ENCODE measurements at regions of chr17 and their contacts with region 1.

Region 1: DNA sequence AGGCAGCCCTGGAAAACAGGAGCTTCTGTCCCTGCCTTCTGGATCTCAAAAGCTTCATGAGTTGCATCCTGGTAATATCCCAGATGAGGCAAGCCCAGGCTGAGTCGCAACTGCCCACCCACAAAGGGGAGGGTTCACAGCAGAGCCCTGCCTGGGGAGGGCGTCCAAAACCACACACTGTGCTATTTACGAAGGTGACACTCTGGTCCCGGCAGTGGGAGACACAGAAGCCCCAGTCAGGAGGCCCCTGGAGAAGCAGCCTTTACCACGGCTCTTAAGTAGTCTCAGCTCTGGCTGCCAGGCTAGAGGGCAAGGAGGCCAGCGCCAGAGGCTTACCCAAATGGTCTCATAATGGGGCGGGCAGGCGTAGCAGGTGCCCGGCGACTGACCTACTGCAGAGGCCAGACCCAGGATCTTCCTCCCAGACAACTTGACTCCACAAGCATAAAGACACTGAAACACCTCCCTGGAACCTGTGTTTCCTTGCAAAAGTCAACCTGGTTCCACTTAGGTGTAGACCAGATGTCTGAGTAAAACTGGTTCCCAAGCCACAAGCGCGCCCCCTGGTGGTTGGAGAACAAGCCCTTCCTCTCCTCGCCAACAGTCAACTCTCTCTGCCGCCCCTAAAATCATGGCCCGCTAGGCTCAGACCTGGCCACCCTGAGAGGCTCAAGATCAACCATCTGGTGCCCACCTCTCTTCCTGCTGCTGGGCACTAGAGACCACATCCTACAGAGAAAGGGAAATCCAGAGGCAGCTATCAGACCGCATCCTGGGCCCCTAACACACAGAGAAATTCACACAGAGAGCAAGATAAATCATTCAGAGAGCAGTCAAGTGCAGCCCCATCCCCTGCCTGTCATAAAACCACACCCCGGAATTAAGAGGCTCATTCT is 5.2 kb downstream of the AXIN2 start:
- DNase-seq: peak; percentile 96
- H3K4me3 Mint-ChIP-seq: peak overlapping the region; percentile 20
- H3K27ac Mint-ChIP-seq: no peak overlapping the region
- H3K4me1 Mint-ChIP-seq: peaks cover 22% of the 10 kb centered on the region
- H3K27me3 Mint-ChIP-seq: peaks cover 18% of the 10 kb centered on the region

Region 2: GRCh38 chr17:65294179-65294720 is 262.0 kb before region 1 on chr17:
- intact Hi-C with region 1: loop called (anchors 1 kb)
- DNase-seq: peak; percentile 85
- H3K4me3 Mint-ChIP-seq: no peak overlapping the region
- H3K27ac Mint-ChIP-seq: no peak overlapping the region
- H3K4me1 Mint-ChIP-seq: no peaks in the 10 kb centered on the region
- H3K27me3 Mint-ChIP-seq: peaks cover 6% of the 10 kb centered on the region

Region 3: GRCh38 chr17:65362825-65363224 is 193.4 kb before region 1 on chr17:
- intact Hi-C with region 1: loop called (anchors 10 kb)
- DNase-seq: no peak
- H3K4me3 Mint-ChIP-seq: no peak overlapping the region
- H3K27ac Mint-ChIP-seq: no peak overlapping the region
- H3K4me1 Mint-ChIP-seq: peaks cover 12% of the 10 kb centered on the region
- H3K27me3 Mint-ChIP-seq: peaks cover 1% of the 10 kb centered on the region

Region 4: DNA sequence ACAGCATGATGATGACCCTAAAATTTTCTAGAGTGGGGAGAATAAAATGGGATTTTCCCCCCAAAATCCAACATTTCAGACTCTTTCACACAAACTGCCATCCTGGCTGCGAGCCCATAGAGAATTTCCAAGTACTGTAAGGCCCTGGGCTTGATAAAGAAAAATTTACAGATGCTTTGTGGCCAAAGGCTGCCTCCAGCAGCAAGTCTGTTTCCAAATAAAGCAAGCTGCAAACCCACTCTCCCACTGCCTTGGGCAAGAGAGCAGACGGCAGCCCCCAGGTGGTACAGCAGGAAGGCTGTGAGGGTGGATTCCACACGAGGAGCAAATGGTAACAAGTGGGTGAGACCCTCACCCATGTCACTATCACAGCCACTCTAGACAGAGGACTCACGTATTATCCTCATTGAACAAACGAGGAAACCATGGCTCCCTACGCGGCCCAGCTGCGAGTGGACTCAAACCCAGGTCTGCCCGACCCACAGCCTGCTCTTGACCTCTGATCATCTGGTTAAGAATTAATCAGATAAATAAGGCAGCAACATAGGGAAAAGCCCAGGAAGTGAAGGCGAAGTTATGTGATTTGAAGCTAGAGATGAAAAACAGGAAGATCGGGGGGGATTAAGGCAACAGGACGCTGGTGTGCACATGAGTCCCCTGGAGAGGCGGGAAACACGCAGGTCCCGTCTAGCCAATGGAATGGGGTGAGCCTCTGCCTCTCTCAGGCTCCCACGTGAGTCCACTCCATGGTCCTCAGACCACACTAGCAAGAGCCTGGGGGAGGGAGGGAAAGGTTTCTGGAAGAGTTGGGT is 32.2 kb before region 1 on chr17:
- intact Hi-C with region 1: loop called (anchors 1 kb)
- DNase-seq: peak; percentile 74
- H3K4me3 Mint-ChIP-seq: peak overlapping the region; percentile 73
- H3K27ac Mint-ChIP-seq: peak overlapping the region; percentile 87
- H3K4me1 Mint-ChIP-seq: peaks cover 31% of the 10 kb centered on the region
- H3K27me3 Mint-ChIP-seq: peaks cover 44% of the 10 kb centered on the region

Region 5: DNA sequence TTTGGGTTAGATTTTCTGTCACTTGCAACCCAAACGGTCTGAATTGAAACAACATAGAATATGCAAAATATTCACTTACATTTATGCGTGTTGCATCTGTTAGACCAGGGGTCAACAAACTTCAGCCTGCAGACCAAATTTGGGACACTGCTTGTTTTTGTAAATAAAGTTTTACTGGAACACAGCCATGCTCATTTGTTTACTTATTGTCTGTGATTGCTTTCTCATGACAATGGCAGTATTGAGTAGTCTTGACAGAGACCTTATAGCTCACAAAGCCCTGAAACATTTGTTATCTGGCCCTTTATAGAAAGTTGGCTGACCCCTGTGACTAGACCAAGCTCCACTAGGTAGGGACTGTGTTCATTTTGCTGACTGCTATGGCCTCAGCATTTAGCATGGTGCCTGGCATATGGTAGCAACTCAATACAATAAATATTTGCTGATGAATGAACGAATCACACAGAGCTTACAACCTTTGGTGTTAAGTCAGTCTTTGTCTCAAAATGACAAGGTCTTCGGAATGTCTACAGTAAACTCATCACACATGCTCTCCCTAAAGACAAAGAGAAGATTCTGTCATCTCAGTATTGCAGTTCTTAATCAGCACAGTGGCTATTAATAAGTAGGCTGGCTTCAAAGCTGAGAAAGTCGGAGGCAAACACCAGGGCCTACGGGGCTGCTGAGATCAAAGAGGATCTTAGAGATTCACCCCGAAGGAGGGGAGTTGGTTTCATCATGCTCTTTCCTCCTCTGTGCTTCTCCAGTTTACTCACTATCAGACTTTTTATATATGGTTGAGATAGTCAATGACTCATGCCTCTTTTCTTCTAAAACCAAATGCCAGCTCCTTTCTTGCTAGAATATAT is 100.4 kb after region 1 on chr17:
- intact Hi-C with region 1: loop called (anchors 10 kb)
- DNase-seq: no peak
- H3K4me3 Mint-ChIP-seq: no peak overlapping the region
- H3K27ac Mint-ChIP-seq: no peak overlapping the region
- H3K4me1 Mint-ChIP-seq: no peaks in the 10 kb centered on the region
- H3K27me3 Mint-ChIP-seq: no peaks in the 10 kb centered on the region

Region 6: GRCh38 chr17:65794572-65794971 is 238.3 kb after region 1 on chr17:
- intact Hi-C with region 1: loop called (anchors 10 kb)
- DNase-seq: peak; percentile 59
- H3K4me3 Mint-ChIP-seq: no peak overlapping the region
- H3K27ac Mint-ChIP-seq: no peak overlapping the region
- H3K4me1 Mint-ChIP-seq: peaks cover 5% of the 10 kb centered on the region
- H3K27me3 Mint-ChIP-seq: peaks cover 10% of the 10 kb centered on the region

Region 7: GRCh38 chr17:66165513-66166123 is 609.4 kb after region 1 on chr17:
- intact Hi-C with region 1: loop called (anchors 5 kb)
- DNase-seq: peak; percentile 77
- H3K4me3 Mint-ChIP-seq: no peak overlapping the region
- H3K27ac Mint-ChIP-seq: no peak overlapping the region
- H3K4me1 Mint-ChIP-seq: no peaks in the 10 kb centered on the region
- H3K27me3 Mint-ChIP-seq: peaks cover 2% of the 10 kb centered on the region

Measured in activated CD4-positive, alpha-beta T cell treated with anti-CD3 and anti-CD28 coated beads, Interleukin-2, amount 10 ng/mL, durations not matched to agents 24 days and 14 days (primary cell).